Posterior vena cava (tissue), 2 donors: ENCODE measurements at regions of chr12 and their contacts with region 1.

Region 1: GRCh38 chr12:58765653-58766512 is 154.4 kb downstream of the LRIG3 start:
- DNase-seq: no peak

Region 2: GRCh38 chr12:58711974-58712373 is 53.9 kb before region 1 on chr12:
- intact Hi-C with region 1: no loop called
- DNase-seq: no peak

Region 3: DNA sequence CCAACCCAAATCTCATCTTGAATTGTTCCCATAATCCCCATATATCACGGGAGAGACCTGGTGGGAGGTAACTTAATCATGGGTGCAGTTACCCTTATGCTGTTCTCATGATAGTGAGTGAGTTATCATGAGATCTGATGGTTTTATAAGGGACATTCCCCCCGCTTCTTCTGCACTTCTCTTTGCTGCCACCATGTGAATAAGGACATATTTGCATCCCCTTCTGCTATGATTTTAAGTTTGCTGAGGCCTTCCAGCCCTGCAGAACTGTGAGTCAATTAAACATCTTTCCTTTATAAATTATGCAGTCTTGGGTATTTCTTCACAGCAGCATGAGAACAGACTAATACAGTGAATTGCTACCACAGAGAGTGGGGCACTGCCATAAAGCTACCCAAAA is 24.7 kb before region 1 on chr12:
- intact Hi-C with region 1: loop called in 1 of 2 experiments (anchors 1 kb)
- DNase-seq: no peak

Region 4: DNA sequence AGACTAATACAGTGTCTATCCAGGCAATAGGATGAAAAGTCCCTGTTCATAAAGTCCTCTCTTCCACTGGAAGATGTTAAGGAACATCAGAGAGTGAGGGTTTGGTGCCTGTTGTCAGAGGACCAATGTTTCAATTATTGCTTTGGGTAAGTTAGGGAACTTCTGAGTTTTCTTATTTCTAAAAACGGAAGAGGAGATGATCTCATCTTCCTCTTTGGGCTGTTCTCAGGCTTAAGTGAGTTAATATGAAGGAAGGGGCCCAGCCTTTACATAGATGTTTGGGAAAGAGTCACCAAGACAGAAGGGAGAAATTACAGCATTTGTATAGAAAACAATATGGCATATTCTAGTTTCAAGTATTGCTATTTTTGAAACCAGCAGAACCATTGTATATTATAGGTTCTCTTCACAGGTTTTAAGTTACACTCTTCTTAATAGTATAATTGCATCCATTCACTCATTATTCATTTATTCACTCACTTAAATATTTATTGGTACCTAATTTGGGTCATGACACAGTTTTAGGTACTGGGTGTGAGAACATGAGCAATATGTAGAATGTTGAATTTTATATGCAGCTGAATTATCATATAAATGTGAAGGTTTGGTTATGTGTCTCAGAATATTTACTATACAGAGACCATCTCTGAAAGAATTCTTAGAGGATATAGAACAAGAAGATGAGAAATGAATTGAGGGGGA is 222.9 kb after region 1 on chr12:
- intact Hi-C with region 1: no loop called
- DNase-seq: no peak

Region 5: DNA sequence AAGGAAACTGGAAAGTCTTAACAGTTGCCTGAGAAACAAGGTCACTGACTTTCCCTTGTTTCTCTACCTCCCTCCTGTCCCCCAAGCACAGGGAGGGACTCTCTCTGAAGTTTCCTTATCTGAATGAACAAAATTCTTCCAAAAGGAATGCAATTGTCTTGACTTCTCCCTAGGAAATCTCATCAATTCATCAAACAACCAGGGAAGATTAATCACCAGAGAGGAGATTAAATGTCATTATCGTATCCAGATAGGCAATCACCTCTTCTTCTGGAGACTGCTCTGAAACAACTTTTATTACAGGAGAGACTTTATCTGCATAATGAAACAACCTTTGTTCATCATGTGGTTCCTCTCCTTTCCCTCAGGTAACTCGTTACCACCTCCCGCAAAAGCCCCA is 1261.4 kb after region 1 on chr12:
- intact Hi-C with region 1: loop called in 1 of 2 experiments (anchors 5 kb)
- DNase-seq: no peak